CD8-positive, alpha-beta memory T cell (primary cell): ENCODE measurements at regions of chr20 and their contacts with region 1.

Region 1: DNA sequence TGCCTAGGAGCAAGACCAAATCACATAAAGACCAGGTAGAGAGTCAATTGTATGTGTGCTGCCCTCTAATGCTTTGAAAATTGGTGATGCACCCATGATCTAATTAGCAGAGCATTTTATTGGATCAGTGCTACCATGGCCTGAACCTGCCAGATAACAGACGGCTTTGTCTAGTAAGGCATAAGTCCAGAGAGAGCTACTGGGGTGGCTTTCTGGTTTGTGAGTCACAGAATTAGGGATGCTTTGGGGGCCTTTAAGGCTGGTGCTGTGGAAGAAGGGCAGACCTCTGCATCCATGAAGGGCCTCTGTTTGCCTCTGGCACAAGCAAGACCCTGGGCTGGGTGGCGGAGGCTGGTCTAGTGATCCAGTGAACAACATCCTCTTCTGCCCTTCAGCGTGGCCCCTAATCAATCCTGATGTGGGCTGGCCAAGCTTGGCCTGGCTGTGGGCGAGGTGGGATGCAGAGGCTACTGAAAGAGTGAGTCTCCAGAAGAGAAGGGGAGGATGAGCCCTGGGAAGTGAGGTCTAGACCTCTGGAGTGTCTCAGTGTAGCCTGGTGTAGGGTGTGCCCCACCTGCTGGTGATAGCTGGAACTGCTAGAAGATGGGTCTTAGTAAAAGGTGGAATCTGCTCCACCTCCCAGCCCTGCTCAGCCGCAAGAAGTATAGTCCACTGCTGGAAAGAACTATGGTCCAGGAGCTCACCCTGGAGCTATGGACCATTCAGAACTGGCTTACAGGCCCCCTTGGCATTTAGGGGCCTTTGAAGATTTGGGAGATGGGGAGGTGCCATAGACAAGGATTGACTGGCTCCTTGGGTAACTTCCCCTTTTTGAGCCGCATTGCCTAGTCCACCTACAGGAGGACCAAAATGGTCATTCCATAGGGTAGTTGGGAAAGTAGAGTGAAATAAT is 36.7 kb upstream of the AAR2 start:
- DNase-seq: peak; percentile 30 to 78 (median 55)
- H3K4me3 ChIP-seq: no peak overlapping the region
- H3K4me3 Mint-ChIP-seq: no peak overlapping the region
- H3K27ac ChIP-seq: no peak overlapping the region
- H3K27ac Mint-ChIP-seq: peak overlapping the region in 1 of 8 donors; percentile 72
- H3K4me1 ChIP-seq: peaks cover 7% of the 10 kb centered on the region
- H3K4me1 Mint-ChIP-seq: peaks cover 4 to 6% (median 6%) of the 10 kb centered on the region in 3 donors
- H3K27me3 ChIP-seq: no peaks in the 10 kb centered on the region
- H3K27me3 Mint-ChIP-seq: peaks cover 8 to 15% of the 10 kb centered on the region in 2 donors

Region 2: DNA sequence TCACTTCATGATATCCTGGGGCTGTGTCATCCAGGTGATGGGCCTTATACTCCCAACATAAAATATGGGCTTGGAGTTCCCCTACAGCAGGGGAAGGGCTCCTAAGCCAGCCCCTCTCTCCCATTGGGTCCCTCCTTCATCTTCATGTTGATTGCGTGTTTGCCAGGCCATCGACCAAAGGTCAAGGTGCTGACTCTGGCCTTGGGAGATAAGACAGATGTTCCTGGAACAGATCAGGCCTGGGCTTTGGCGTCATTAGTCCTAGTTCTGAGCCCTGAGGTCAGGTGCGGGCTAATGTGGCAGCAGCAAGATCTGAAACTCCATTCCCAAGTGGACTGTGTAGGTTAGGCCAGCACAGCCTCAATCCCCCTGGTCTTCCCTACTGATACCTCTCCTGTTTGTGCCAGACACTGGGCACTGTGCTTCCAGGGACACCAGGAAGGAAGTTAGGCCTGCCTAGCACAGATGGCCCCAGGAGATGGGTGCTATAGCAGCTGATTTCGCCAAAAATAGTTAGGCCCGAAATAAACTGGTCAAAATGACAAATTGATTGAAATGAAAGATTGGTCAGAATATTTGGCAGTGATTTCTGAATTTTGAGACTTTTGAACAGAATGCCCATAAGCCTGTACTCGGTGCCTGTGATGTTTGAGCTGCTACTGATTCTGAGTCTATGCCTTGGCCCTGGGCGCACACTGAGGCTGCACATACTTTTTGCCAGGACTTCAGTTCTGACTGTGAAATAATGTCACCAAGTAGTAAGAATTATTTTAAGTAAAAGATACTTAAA is 16.3 kb before region 1 on chr20:
- CTCF ChIA-PET with region 1: interaction called, 10 read pairs
- POLR2A ChIA-PET with region 1: no interaction called
- DNase-seq: no peak
- H3K4me3 ChIP-seq: no peak overlapping the region
- H3K4me3 Mint-ChIP-seq: no peak overlapping the region
- H3K27ac ChIP-seq: peak overlapping the region; percentile 35
- H3K27ac Mint-ChIP-seq: no peak overlapping the region
- H3K4me1 ChIP-seq: no peaks in the 10 kb centered on the region
- H3K4me1 Mint-ChIP-seq: no peaks in the 10 kb centered on the region
- H3K27me3 ChIP-seq: no peaks in the 10 kb centered on the region
- H3K27me3 Mint-ChIP-seq: peaks cover 4% of the 10 kb centered on the region in 2 donors

Region 3: DNA sequence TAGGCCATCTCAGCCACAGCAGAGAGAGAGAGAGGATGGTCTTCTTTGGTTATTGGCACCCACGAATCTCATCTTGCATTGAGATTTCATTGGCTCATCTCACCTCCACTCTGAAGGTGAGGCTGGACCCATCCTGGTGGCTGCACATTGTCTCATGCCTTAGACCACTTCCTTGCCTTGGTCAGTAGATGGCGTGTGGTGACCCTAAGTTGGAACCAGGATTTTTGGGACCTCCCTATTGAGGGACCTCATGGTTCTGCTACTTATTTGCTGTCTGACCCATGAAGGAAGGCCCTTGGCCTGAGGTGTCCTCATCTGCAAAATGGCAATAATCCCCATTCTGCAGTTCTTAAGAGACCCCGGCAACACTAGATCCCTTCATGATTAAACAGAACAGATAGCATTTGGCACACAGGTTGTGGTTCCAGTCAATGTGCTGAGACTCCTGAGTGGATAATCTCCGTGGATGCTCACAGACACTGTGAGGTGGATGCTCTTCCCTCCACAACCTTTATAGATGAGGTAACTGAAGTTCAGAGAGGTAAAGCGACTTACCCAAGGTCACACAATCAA is 15.2 kb after region 1 on chr20:
- CTCF ChIA-PET with region 1: interaction called, 10 read pairs
- POLR2A ChIA-PET with region 1: no interaction called
- DNase-seq: no peak
- H3K4me3 ChIP-seq: no peak overlapping the region
- H3K4me3 Mint-ChIP-seq: no peak overlapping the region
- H3K27ac ChIP-seq: no peak overlapping the region
- H3K27ac Mint-ChIP-seq: peak overlapping the region in 1 of 8 donors; percentile 71
- H3K4me1 ChIP-seq: no peaks in the 10 kb centered on the region
- H3K4me1 Mint-ChIP-seq: no peaks in the 10 kb centered on the region
- H3K27me3 ChIP-seq: no peaks in the 10 kb centered on the region
- H3K27me3 Mint-ChIP-seq: peaks cover 5 to 19% of the 10 kb centered on the region in 2 donors

Region 4: GRCh38 chr20:36439040-36439730 is 239.6 kb after region 1 on chr20:
- CTCF ChIA-PET with region 1: interaction called, 18 read pairs
- POLR2A ChIA-PET with region 1: no interaction called
- DNase-seq: peak; percentile 28 to 70 (median 46)
- H3K4me3 ChIP-seq: no peak overlapping the region
- H3K4me3 Mint-ChIP-seq: no peak overlapping the region
- H3K27ac ChIP-seq: no peak overlapping the region
- H3K27ac Mint-ChIP-seq: peak overlapping the region in 3 of 8 donors; percentile 19 to 24 (median 19)
- H3K4me1 ChIP-seq: no peaks in the 10 kb centered on the region
- H3K4me1 Mint-ChIP-seq: peaks cover 3 to 11% (median 4%) of the 10 kb centered on the region in 3 donors
- H3K27me3 ChIP-seq: no peaks in the 10 kb centered on the region
- H3K27me3 Mint-ChIP-seq: peaks cover 3 to 25% of the 10 kb centered on the region in 2 donors